BJ (cell line): ENCODE measurements at regions of chr2 and their contacts with region 1.

Region 1: GRCh38 chr2:15860760-15861159 is 79.6 kb upstream of the MYCN start:
- DNase-seq: no peak
- H3K4me3 ChIP-seq: no peak overlapping the region
- H3K27me3 ChIP-seq: no peaks in the 10 kb centered on the region
- CTCF ChIP-seq: no peak

Region 2: GRCh38 chr2:15842758-15843666 is 17.7 kb before region 1 on chr2:
- CTCF ChIA-PET with region 1: no interaction called
- POLR2A ChIA-PET with region 1: no interaction called
- DNase-seq: no peak
- H3K4me3 ChIP-seq: no peak overlapping the region
- H3K27me3 ChIP-seq: no peaks in the 10 kb centered on the region
- CTCF ChIP-seq: no peak

Region 3: GRCh38 chr2:15874316-15874715 is 13.6 kb after region 1 on chr2:
- CTCF ChIA-PET with region 1: no interaction called
- POLR2A ChIA-PET with region 1: no interaction called
- DNase-seq: no peak
- H3K4me3 ChIP-seq: no peak overlapping the region
- H3K27me3 ChIP-seq: no peaks in the 10 kb centered on the region
- CTCF ChIP-seq: no peak

Region 4: GRCh38 chr2:16155766-16156165 is 295.0 kb after region 1 on chr2:
- CTCF ChIA-PET with region 1: no interaction called
- POLR2A ChIA-PET with region 1: interaction called, 10 read pairs
- DNase-seq: no peak
- H3K4me3 ChIP-seq: no peak overlapping the region
- H3K27me3 ChIP-seq: no peaks in the 10 kb centered on the region
- CTCF ChIP-seq: no peak